ENCODE measurements at regions of chr22 and their contacts with region 1.

Region 1: DNA sequence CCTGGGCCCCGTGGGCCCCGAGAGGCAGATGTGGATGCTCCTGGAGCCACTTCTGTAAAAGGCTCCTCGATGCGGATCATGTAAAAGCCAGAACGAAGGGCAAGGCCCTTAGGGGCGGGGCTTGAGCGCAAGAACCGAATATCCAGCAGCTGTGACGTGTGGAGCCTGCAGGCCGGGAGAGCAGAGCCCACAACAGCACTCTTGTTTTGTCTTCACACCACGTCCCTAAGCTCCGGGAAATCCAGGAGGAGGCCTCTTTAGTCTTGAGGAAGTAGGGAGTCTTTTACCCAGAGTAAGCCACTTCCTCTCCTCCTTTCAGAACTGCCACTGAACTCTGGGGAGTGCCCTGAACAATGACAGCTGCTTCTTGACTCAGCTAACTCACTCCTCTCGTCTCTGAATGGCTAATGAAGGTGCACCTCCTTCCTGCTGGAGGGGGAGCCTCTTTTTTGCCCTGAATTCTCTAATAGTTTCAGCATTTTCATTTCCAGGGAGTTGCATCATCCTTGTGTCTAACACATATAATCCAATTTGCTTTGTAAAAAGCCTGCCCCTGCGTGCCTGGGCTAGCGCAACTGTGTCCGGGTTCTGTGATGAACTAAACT is 12.5 kb downstream of the L3MBTL2 start:
- DNase-seq: peak; percentile 29
- ATAC-seq: peak; percentile 88
- H3K4me3 Mint-ChIP-seq: peak overlapping the region; percentile 68
- H3K27ac Mint-ChIP-seq: peak overlapping the region; percentile 69
- H3K4me1 Mint-ChIP-seq: peaks cover 12% of the 10 kb centered on the region
- H3K27me3 Mint-ChIP-seq: no peaks in the 10 kb centered on the region
- CTCF ChIP-seq: no peak

Region 2: GRCh38 chr22:41178425-41178975 is 39.2 kb before region 1 on chr22:
- CTCF ChIA-PET with region 1: no interaction called
- POLR2A ChIA-PET with region 1: no interaction called
- intact Hi-C with region 1: loop called (anchors 5 kb)
- DNase-seq: no peak
- ATAC-seq: no peak
- H3K4me3 Mint-ChIP-seq: no peak overlapping the region
- H3K27ac Mint-ChIP-seq: no peak overlapping the region
- H3K4me1 Mint-ChIP-seq: peaks cover 31% of the 10 kb centered on the region
- H3K27me3 Mint-ChIP-seq: no peaks in the 10 kb centered on the region
- CTCF ChIP-seq: no peak

Measured in activated B cell treated with CpG ODN at 0.5 μM for 24 hours (primary cell).